Activated T-helper 2 cell treated with anti-CD3 and anti-CD28 coated beads, Interferon-gamma antibody, Interleukin-2, Interleukin-4, amounts not matched to agents 10 μg/mL and 5 μg/mL and 100 μg/mL, durations not matched to agents 14 hours and 24 hours and 36 hours (primary cell): ENCODE measurements at regions of chr3 and their contacts with region 1.

Region 1: DNA sequence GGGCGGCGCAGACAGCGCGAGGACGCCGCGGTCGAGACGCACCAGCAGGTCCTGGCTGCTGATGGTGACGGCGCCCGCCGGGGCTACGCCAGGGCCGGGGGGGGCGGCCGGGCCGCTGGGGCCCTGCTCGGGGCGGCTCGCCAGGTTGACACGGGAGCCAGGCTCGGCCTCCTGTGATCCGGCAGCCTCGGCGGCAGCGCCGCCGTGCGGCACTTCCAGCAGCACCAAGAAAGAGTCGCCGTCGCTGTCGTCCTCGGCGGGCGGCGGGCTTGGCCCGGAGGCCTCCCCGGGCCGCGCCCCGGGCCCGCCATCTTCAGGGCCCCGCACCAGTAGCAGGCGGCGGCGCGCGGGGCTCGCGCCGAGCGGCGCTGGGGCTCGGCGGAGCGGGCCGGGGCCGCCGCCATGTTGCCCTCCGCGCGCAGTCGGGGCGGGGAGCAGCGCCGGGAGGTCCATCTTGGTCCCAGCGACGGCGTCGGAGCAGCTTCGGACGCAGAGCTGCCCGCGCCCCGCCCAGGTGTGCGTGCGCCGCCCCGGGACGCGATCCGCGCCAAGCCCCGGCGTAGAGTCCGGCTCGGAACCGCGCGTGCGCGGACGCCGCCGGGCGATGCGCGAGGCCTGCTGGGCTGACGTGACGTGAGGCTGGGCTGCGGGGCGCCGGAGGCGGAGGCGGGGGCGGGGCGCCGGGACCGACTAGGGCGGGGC is at the start of gene ZXDC:
- DNase-seq: peak; percentile 90
- H3K4me3 Mint-ChIP-seq: peak within 1 kb of the TSS; percentile 94
- H3K27ac Mint-ChIP-seq: peak within 1 kb of the TSS; percentile 92
- H3K4me1 Mint-ChIP-seq: peaks cover 28% of the 10 kb centered on the region
- H3K27me3 Mint-ChIP-seq: no peaks in the 10 kb centered on the region
- total RNA-seq, gene ZXDC: 26.1 and 27.0 TPM in 2 replicates

Region 2: GRCh38 chr3:126357295-126358037 is 118.1 kb before region 1 on chr3 and contains the start of gene KLF15:
- intact Hi-C with region 1: loop called (anchors 10 kb)
- DNase-seq: peak; percentile 71
- H3K4me3 Mint-ChIP-seq: peak within 1 kb of the TSS; percentile 78
- H3K27ac Mint-ChIP-seq: no peak within 1 kb of the TSS
- H3K4me1 Mint-ChIP-seq: peaks cover 8% of the 10 kb centered on the region
- H3K27me3 Mint-ChIP-seq: peaks cover 48% of the 10 kb centered on the region
- total RNA-seq, gene KLF15: 0.14 and 0.30 TPM in 2 replicates